AG04450 (cell line): ENCODE measurements at regions of chr14 and their contacts with region 1.

Region 1: GRCh38 chr14:22822571-22823098 is 7.1 kb upstream of the MRPL52 start:
- DNase-seq: peak; percentile 62
- H3K4me3 ChIP-seq: peak overlapping the region; percentile 34
- H3K27ac ChIP-seq: peak overlapping the region; percentile 65
- H3K27me3 ChIP-seq: no peaks in the 10 kb centered on the region
- CTCF ChIP-seq: peak; percentile 87

Region 2: GRCh38 chr14:22653012-22653621 is 169.5 kb before region 1 on chr14:
- CTCF ChIA-PET with region 1: interaction called, 12 read pairs
- POLR2A ChIA-PET with region 1: no interaction called
- DNase-seq: peak; percentile 57
- H3K4me3 ChIP-seq: no peak overlapping the region
- H3K27ac ChIP-seq: no peak overlapping the region
- H3K27me3 ChIP-seq: peaks cover 2% of the 10 kb centered on the region
- CTCF ChIP-seq: peak; percentile 98

Region 3: DNA sequence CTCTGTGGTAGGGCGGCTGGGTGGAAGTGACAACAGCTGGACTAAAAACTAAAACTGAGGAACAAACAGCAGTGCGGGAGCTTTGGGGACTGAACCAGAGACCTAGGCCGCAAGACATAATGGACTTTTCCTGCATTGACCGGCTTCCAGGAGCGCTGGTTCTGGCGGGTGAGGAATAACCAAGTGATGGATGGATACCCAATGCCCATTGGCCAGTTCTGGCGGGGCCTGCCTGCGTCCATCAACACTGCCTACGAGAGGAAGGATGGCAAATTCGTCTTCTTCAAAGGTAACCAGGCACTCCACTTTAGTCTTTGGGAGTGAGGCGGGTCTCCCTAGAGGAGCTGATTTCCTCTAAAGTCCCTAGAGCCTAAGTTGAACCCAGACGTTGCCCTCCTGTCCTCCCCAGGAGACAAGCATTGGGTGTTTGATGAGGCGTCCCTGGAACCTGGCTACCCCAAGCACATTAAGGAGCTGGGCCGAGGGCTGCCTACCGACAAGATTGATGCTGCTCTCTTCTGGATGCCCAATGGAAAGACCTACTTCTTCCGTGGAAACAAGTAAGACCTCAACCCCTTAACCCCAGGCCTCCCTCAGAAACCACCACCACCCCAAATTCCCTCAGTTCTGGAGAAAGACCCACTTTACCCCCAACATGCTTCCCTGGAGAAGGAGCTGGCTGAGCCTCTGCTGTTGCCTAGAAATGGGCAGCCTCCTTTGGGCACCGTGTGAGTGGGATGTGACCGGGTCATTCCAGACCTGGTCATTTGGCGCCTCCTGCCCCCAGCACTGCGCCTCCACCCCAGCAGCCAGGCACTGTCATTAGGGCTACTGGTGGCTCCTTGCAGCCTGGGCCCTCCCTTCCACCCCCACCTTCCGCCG is 21.8 kb after region 1 on chr14:
- CTCF ChIA-PET with region 1: interaction called, 217 read pairs
- POLR2A ChIA-PET with region 1: interaction called, 35 read pairs
- DNase-seq: no peak
- H3K4me3 ChIP-seq: no peak overlapping the region
- H3K27ac ChIP-seq: peak overlapping the region; percentile 65
- H3K27me3 ChIP-seq: no peaks in the 10 kb centered on the region
- CTCF ChIP-seq: no peak

Region 4: DNA sequence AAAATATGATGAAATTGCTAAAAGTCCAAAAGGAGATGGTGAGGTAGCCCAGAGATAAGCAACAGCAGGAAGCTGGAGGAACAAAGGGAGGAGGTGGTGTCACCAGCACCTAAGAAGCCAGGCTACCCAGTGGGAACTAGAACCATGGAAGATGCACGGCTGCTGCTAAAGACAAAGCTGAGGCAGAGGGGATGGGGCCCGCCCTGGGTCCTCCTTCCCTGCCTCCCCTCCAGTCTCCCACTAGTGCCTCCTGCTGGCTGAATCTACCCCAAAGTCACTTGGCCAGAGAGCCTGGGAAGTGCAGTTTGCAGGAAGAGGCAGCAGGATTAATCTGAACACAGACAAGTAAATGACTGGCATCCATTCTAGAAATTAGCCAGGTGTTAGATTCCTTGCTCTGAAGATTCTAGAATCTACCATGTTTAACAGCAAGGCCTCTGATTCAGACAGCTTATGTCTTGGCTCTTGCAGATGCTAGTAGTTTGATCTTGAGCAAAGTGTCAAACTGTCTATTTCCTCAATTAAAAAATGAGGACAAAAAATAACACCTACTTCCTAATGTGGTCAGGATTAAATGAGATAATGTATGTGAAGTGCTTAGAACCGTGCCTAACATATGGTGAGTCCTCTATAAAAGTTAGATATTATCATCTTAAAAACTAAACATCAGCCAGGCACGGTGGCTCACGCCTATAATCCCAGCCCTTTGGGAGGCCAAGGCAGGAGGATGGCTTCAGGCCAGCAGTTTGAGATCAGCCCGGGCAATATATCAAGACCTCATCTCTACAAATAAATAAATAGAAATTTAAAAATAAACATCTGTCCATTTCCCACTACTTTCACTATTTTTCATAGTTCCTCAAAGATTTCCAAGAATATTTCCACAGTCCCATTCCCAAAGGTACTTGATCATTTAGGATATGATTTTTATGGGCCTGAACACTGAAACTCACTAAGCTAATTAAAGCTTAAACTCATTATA is 43.1 kb after region 1 on chr14:
- CTCF ChIA-PET with region 1: interaction called, 28 read pairs
- POLR2A ChIA-PET with region 1: no interaction called
- DNase-seq: no peak
- H3K4me3 ChIP-seq: no peak overlapping the region
- H3K27ac ChIP-seq: no peak overlapping the region
- H3K27me3 ChIP-seq: no peaks in the 10 kb centered on the region
- CTCF ChIP-seq: no peak

Region 5: GRCh38 chr14:22900081-22900799 is 77.6 kb after region 1 on chr14:
- CTCF ChIA-PET with region 1: interaction called, 56 read pairs
- POLR2A ChIA-PET with region 1: interaction called, 4 read pairs
- DNase-seq: peak; percentile 53
- H3K4me3 ChIP-seq: no peak overlapping the region
- H3K27ac ChIP-seq: no peak overlapping the region
- H3K27me3 ChIP-seq: no peaks in the 10 kb centered on the region
- CTCF ChIP-seq: peak; percentile 66